ENCODE measurements at regions of chr5 and their contacts with region 1.

Region 1: GRCh38 chr5:112921833-112922817 is at the start of gene REEP5:
- DNase-seq: peak; percentile 64 to 95 (median 82)
- ATAC-seq: peak; percentile 69
- H3K4me3 ChIP-seq: peak within 1 kb of the TSS; percentile 94
- H3K4me3 Mint-ChIP-seq: peak within 1 kb of the TSS; percentile 90
- H3K27ac ChIP-seq: peak within 1 kb of the TSS; percentile 80 to 87
- H3K27ac Mint-ChIP-seq: peak within 1 kb of the TSS; percentile 87
- H3K4me1 ChIP-seq: peaks cover 57% of the 10 kb centered on the region
- H3K4me1 Mint-ChIP-seq: peaks cover 63% of the 10 kb centered on the region
- H3K27me3 ChIP-seq: no peaks in the 10 kb centered on the region
- H3K27me3 Mint-ChIP-seq: no peaks in the 10 kb centered on the region
- CTCF ChIP-seq: peak; percentile 35
- total RNA-seq, gene REEP5: 25.3 to 26.6 TPM

Region 2: DNA sequence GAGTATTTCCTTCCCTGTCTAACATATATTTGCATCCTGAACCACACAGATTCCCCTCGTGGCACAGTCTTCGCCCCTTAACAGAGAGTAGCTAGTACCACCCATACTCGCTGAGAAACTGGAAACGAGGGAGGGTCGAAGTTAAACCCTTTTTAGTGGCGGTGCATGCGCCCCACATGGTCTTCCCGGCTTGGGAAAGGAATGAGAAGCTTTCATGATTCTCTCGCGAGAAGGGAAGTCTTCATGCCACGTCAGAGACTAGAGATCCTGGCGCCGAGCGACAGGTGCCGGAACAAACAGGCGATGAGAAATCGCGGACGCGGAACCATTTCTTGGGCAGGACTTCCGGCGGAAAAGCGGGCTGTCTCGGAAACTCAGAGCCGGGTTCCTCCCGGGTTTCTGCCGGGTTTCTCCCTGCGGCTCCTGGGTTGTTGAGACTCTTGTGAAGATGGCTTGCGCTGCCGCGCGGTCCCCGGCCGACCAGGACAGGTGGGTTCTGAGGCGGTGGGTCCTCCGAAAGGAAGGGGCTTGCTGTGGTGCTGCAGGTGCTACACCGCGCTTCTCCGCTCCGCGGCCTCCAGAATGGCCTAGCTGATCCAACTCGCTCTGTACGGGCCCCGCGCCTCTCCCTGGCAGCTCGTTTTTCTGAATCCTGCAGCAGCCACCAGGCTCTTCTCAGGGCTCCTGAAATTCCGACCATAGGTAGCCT is 61.0 kb before region 1 on chr5 and contains the start of gene SRP19:
- CTCF ChIA-PET with region 1: interaction called, 5 read pairs
- POLR2A ChIA-PET with region 1: interaction called, 8 read pairs
- intact Hi-C with region 1: loop called (anchors 2 to 5 kb)
- DNase-seq: peak; percentile 82 to 97 (median 86)
- ATAC-seq: peak; percentile 93
- H3K4me3 ChIP-seq: peak within 1 kb of the TSS; percentile 94
- H3K4me3 Mint-ChIP-seq: peak within 1 kb of the TSS; percentile 92
- H3K27ac ChIP-seq: peak within 1 kb of the TSS; percentile 65 to 88
- H3K27ac Mint-ChIP-seq: peak within 1 kb of the TSS; percentile 93
- H3K4me1 ChIP-seq: peaks cover 24% of the 10 kb centered on the region
- H3K4me1 Mint-ChIP-seq: peaks cover 36% of the 10 kb centered on the region
- H3K27me3 ChIP-seq: no peaks in the 10 kb centered on the region
- H3K27me3 Mint-ChIP-seq: peaks cover 12% of the 10 kb centered on the region
- CTCF ChIP-seq: no peak
- total RNA-seq, gene SRP19: 40.2 to 40.8 TPM

Region 3: DNA sequence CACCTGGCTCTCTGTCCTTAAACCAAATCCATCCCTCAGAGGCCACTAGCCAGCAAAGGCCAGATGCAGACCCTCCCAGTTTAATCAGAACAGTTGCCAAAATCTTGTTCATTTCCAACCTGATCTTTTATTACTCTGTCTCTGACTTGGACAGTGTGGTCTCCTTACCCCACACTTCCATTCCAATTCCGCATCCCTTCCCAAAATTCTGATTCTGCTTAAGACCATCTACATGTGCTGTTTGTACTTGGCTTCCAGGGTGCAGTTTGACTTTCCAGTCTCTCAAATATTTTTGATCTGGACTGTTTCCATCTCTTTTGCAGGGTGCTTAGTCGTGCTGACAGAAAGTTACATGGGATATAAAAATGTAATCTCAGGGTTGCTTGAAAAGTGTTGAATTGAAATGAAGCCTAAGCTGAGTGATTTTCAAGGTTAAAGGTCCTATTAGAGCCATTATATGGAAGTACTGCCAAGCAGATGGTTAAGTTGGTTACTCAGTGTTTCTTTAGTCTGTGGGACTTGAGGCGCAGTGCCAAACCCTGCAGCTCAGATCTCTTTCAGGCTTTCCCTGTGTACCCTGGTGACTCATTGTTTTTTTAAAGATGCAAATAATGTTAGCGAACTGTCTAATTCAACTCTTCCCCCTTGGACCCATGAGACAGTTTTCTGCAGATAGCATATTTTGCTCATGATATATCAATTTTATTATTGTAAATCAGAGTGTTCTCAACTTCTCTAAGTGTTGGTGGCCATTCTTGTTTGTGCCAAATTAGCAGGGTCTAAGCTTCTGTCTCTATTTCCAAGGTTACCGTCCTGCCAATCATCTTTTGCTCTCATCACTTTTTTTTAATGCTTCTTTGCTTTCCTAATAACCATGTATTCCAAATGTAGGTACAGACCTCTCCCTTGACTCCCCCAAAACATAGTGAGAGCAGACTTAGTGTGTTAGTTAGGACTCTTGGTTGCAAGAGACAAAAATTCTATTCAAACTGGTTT is 36.3 kb after region 1 on chr5:
- CTCF ChIA-PET with region 1: no interaction called
- POLR2A ChIA-PET with region 1: interaction called, 6 read pairs
- intact Hi-C with region 1: loop called in 1 of 2 experiments (anchors 2 kb)
- DNase-seq: peak in 1 of 14 experiments; percentile 23
- ATAC-seq: no peak
- H3K4me3 ChIP-seq: no peak overlapping the region
- H3K4me3 Mint-ChIP-seq: no peak overlapping the region
- H3K27ac ChIP-seq: no peak overlapping the region
- H3K27ac Mint-ChIP-seq: no peak overlapping the region
- H3K4me1 ChIP-seq: no peaks in the 10 kb centered on the region
- H3K4me1 Mint-ChIP-seq: peaks cover 5% of the 10 kb centered on the region
- H3K27me3 ChIP-seq: no peaks in the 10 kb centered on the region
- H3K27me3 Mint-ChIP-seq: no peaks in the 10 kb centered on the region
- CTCF ChIP-seq: no peak

Region 4: DNA sequence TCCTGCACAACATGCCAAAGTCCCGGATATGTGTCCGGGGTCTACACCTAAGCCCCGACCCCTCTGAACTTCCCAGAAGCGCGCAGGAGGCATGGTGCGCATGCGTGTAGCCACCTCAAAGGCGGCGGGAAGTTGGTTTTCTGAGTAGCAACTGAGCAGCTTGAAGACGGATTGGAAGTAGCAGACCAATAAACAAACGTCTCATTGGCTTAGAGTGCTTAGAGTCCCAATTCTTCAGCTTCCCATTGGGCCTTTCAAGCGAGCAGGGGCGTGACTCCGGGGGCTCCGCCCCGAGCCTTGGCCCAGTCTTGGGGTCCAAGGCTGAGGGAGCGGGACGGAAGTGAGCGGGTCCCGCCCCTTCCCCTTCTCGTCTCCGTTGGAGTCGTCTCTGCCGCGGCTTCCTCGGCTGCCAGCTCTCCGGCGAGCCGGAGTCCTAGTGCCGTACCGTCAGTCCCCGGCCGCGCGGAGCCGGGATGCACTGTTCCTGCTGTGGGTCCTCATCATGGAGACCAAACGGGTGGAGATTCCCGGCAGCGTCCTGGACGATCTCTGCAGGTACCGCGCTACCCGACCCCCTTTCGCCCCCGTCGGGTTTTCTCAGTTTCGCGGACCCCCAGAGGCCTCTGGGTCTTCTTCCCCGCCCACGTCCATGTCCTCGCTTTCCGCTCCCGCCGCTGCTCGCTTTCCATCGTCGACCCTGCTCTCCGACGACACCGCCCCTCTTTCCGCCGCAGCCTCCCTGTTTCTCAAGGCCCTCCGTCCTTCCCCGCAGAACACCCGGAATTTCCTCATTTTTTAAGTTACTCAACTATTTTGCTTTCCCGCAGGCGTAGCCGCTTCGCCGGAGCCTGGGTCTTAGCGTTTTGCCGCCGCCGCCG is 54.5 kb after region 1 on chr5 and contains the start of gene DCP2:
- CTCF ChIA-PET with region 1: no interaction called
- POLR2A ChIA-PET with region 1: interaction called, 74 read pairs
- intact Hi-C with region 1: loop called (anchors 2 kb)
- DNase-seq: peak; percentile 87 to 99 (median 94)
- ATAC-seq: peak; percentile 93
- H3K4me3 ChIP-seq: peak within 1 kb of the TSS; percentile 92
- H3K4me3 Mint-ChIP-seq: peak within 1 kb of the TSS; percentile 100
- H3K27ac ChIP-seq: peak within 1 kb of the TSS; percentile 72 to 78
- H3K27ac Mint-ChIP-seq: peak within 1 kb of the TSS; percentile 96
- H3K4me1 ChIP-seq: peaks cover 15% of the 10 kb centered on the region
- H3K4me1 Mint-ChIP-seq: peaks cover 56% of the 10 kb centered on the region
- H3K27me3 ChIP-seq: no peaks in the 10 kb centered on the region
- H3K27me3 Mint-ChIP-seq: no peaks in the 10 kb centered on the region
- CTCF ChIP-seq: no peak
- total RNA-seq, gene DCP2: 86.3 to 87.1 TPM

Measured in CD4-positive, alpha-beta T cell (primary cell).